Activated B cell treated with CpG ODN at 0.5 μM for 24 hours (primary cell): ENCODE measurements at regions of chr11 and their contacts with region 1.

Region 1: GRCh38 chr11:123054301-123055065 is 7.5 kb downstream of the HSPA8 start:
- DNase-seq: no peak
- ATAC-seq: peak; percentile 87
- H3K4me3 Mint-ChIP-seq: no peak overlapping the region
- H3K27ac Mint-ChIP-seq: peak overlapping the region; percentile 61
- H3K4me1 Mint-ChIP-seq: peaks cover 54% of the 10 kb centered on the region
- H3K27me3 Mint-ChIP-seq: no peaks in the 10 kb centered on the region
- CTCF ChIP-seq: peak; percentile 35

Region 2: DNA sequence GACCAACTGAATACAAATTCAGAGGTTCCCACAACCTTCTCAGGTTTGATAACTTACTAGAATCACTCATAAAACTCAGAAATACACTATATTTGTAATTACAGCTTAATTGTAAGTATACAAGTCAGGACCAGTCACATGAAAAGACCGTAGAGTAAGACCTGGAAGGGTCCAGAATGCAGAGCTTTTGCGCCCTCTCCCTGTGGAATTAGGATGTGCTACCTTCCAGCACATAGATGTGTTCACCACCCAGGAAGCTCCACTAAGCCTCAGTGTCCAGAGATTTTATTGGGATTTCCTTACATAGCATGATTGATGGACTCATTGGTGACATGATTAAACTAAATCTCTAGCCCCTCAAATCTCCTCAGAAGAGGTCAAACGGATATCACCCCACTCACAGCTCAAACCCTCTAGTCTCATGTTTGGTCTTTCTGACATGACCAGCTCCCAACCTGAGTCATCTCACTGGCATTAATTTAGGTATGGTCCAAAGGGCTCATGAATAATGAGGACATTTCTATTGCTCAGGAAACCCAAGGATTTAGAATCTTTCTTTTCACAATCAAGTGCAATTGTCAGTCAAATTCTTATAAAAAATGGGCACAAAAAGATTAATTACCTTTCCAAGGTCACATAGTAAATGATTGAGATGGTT is 476.2 kb before region 1 on chr11:
- CTCF ChIA-PET with region 1: no interaction called
- POLR2A ChIA-PET with region 1: no interaction called
- intact Hi-C with region 1: no loop called
- DNase-seq: no peak
- ATAC-seq: no peak
- H3K4me3 Mint-ChIP-seq: no peak overlapping the region
- H3K27ac Mint-ChIP-seq: no peak overlapping the region
- H3K4me1 Mint-ChIP-seq: peaks cover 10% of the 10 kb centered on the region
- H3K27me3 Mint-ChIP-seq: peaks cover 4% of the 10 kb centered on the region
- CTCF ChIP-seq: no peak

Region 3: DNA sequence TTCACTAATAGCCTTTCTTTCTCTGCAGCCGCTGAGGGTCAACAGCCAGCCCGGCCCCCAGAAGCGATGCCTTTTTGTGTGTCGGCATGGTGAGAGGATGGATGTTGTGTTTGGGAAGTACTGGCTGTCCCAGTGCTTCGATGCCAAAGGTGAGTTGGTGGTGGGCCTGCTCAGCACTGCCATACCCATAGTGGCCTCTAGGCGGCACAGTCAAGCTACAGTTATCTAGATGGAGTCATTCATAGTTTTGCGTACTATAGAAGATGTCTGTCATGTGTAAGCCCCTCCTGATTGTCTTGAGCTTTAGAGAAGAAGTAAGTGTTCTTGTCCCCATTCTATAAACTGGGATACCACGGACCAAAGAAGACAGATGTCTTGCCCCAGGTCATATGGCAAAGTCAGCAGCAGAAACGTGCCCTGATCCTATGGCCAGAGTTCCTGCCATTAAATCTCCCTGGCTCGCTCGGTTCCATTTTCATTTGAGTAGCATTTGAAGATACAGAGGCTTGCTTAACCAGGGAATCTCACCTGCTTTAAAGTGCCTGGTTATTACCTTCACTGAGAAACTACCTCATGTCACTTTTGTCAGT is 258.3 kb before region 1 on chr11:
- CTCF ChIA-PET with region 1: interaction called, 3 read pairs
- POLR2A ChIA-PET with region 1: no interaction called
- intact Hi-C with region 1: loop called (anchors 1 kb)
- DNase-seq: peak; percentile 52
- ATAC-seq: peak; percentile 97
- H3K4me3 Mint-ChIP-seq: no peak overlapping the region
- H3K27ac Mint-ChIP-seq: no peak overlapping the region
- H3K4me1 Mint-ChIP-seq: peaks cover 4% of the 10 kb centered on the region
- H3K27me3 Mint-ChIP-seq: no peaks in the 10 kb centered on the region
- CTCF ChIP-seq: peak; percentile 39

Region 4: DNA sequence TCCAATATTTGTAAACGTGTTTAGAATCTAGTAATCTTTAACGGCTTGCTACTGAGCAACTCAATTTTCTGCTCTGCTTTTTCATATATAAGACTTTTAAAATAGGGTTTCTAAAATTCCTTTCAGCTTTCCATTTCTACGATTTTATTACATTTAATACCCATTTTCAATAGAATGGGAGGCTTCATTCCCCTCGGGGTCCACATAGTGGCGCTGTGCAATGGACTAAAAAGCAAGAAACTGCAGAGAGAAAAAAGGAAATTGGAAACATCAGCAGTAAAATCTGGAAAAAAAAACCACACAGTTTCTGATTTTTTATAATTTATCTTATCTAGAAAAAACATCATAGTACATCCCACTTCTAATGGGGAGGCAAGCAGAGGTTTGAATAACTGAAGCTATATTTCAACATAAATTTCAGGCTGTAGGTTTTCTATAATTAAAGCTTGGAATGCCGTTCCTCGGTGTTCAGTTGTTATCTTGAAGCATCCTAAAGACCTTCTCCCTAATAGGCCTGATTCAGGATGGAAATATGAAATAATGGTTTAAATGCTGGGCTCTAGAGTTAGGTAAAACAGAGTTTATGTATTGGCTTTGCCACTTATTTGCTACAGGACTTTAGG is 190.7 kb before region 1 on chr11:
- CTCF ChIA-PET with region 1: interaction called, 32 read pairs
- POLR2A ChIA-PET with region 1: no interaction called
- intact Hi-C with region 1: loop called (anchors 1 kb)
- DNase-seq: no peak
- ATAC-seq: no peak
- H3K4me3 Mint-ChIP-seq: no peak overlapping the region
- H3K27ac Mint-ChIP-seq: no peak overlapping the region
- H3K4me1 Mint-ChIP-seq: peaks cover 9% of the 10 kb centered on the region
- H3K27me3 Mint-ChIP-seq: peaks cover 33% of the 10 kb centered on the region
- CTCF ChIP-seq: peak; percentile 80

Region 5: GRCh38 chr11:122981388-122982264 is 72.9 kb before region 1 on chr11 and contains the start of gene BSX:
- CTCF ChIA-PET with region 1: no interaction called
- POLR2A ChIA-PET with region 1: no interaction called
- intact Hi-C with region 1: loop called (anchors 5 kb)
- DNase-seq: no peak
- ATAC-seq: peak; percentile 25
- H3K4me3 Mint-ChIP-seq: no peak within 1 kb of the TSS
- H3K27ac Mint-ChIP-seq: no peak within 1 kb of the TSS
- H3K4me1 Mint-ChIP-seq: peaks cover 36% of the 10 kb centered on the region
- H3K27me3 Mint-ChIP-seq: peaks cover 78% of the 10 kb centered on the region
- CTCF ChIP-seq: no peak
- total RNA-seq, gene BSX: not detected in 2 replicates

Region 6: DNA sequence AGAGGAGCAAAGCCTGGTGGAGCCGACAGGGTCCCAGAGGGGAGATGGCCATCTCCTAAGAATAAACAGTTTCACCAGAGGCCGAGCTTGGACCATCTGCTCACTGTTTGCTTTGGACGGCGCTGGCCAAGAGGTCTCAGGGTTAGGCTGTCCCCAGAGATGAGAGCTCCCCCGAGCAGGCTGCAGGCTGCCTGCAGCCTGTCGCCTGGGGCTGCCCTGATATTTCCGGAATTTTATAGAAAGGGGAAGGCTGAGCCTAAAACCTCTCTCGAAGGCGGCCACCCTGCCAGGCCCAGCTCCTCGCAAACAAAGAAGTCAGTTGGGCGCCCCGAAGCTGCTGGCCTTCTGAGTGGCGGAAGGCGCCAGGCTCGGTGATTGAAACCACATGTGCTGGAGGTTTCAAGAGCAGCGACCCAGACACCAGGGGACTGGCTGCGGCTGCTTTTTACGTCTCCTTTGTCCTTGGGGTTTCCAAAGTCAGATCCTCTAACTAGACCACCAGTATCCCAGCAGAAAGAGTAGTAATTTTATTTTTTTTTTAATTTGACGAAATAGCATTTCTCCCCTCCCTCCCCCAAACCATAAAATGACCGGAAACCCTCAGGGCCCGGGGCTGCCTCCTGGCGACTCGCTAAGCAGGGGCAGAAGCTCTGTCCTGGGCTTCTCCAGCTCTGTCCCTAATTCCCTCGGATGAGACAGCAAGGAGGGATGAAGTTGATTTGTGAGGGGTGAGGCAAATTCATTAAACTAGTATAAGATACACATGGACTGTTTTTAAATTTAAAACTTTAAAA is 83.1 kb after region 1 on chr11:
- CTCF ChIA-PET with region 1: no interaction called
- POLR2A ChIA-PET with region 1: no interaction called
- intact Hi-C with region 1: no loop called
- DNase-seq: no peak
- ATAC-seq: no peak
- H3K4me3 Mint-ChIP-seq: no peak overlapping the region
- H3K27ac Mint-ChIP-seq: no peak overlapping the region
- H3K4me1 Mint-ChIP-seq: peaks cover 4% of the 10 kb centered on the region
- H3K27me3 Mint-ChIP-seq: peaks cover 3% of the 10 kb centered on the region
- CTCF ChIP-seq: no peak